CD4-positive, alpha-beta memory T cell (primary cell): ENCODE measurements at regions of chr17 and their contacts with region 1.

Region 1: GRCh38 chr17:39153599-39154051 is 2.2 kb upstream of the PLXDC1 start:
- DNase-seq: peak; percentile 87 to 93 (median 92)
- H3K4me3 ChIP-seq: peak overlapping the region; percentile 82 to 98
- H3K4me3 Mint-ChIP-seq: peak overlapping the region; percentile 96 to 100 (median 99)
- H3K27ac ChIP-seq: peak overlapping the region; percentile 66
- H3K27ac Mint-ChIP-seq: peak overlapping the region; percentile 93 to 100 (median 98)
- H3K4me1 ChIP-seq: peaks cover 33% of the 10 kb centered on the region
- H3K4me1 Mint-ChIP-seq: peaks cover 28 to 57% (median 43%) of the 10 kb centered on the region in 4 donors
- H3K27me3 ChIP-seq: no peaks in the 10 kb centered on the region
- H3K27me3 Mint-ChIP-seq: peaks cover 3 to 18% of the 10 kb centered on the region in 2 donors

Region 2: DNA sequence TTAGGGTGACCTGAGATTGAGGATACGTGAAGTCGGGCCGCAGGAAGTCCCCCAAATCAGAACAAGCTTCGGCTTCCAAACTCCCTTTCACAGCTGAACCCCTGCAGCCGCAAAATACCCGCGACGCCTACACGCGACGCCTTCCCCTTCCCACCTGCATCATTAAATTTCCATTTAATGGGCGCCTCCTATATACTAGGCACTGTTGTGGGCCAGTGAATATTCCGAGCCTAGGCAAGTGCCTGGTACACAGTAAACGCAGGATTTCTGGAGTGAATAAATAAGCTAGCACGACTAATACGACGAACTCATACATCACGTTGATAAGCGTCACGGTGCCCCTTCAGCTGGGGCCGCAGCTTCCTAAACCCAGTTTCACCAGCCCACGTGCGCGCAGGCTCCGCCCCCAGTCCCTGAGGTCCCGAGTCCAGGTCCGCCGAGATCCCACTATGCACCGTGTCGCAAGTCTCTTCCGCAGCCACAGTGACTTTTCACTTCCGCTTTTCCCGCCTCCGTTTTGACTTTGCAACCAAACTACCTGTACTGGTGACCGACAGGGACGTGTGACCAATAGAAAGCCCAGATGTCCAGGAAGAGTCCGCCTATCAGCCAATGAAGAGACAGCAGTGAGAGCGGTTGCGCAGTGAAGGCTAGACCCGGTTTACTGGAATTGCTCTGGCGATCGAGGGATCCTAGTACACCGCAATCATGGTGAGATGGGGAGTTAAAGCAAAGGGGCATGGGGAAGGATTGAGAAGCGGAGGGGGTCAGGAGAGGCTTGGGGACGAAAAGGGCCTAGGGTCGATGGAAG is 401.3 kb before region 1 on chr17 and contains the start of gene PSMB3:
- CTCF ChIA-PET with region 1: no interaction called
- POLR2A ChIA-PET with region 1: interaction called, 7 read pairs
- intact Hi-C with region 1: loop called (anchors 2 kb)
- DNase-seq: peak; percentile 95 to 99 (median 97)
- H3K4me3 ChIP-seq: peak within 1 kb of the TSS; percentile 81 to 94
- H3K4me3 Mint-ChIP-seq: peak within 1 kb of the TSS; percentile 95 to 100 (median 99)
- H3K27ac ChIP-seq: peak within 1 kb of the TSS; percentile 84
- H3K27ac Mint-ChIP-seq: peak within 1 kb of the TSS; percentile 93 to 100 (median 98)
- H3K4me1 ChIP-seq: peaks cover 57% of the 10 kb centered on the region
- H3K4me1 Mint-ChIP-seq: peaks cover 25 to 57% (median 43%) of the 10 kb centered on the region in 4 donors
- H3K27me3 ChIP-seq: peaks cover 24% of the 10 kb centered on the region
- H3K27me3 Mint-ChIP-seq: peaks cover 7 to 16% of the 10 kb centered on the region in 2 donors
- total RNA-seq, gene PSMB3: 93.5 to 99.0 TPM

Region 3: GRCh38 chr17:38868817-38869525 is 284.7 kb before region 1 on chr17:
- CTCF ChIA-PET with region 1: interaction called, 24 read pairs
- POLR2A ChIA-PET with region 1: interaction called, 62 read pairs
- intact Hi-C with region 1: loop called (anchors 1 kb)
- DNase-seq: peak; percentile 85 to 91 (median 87)
- H3K4me3 ChIP-seq: peak overlapping the region; percentile 66 to 99
- H3K4me3 Mint-ChIP-seq: peak overlapping the region; percentile 93 to 100 (median 96)
- H3K27ac ChIP-seq: peak overlapping the region; percentile 88
- H3K27ac Mint-ChIP-seq: peak overlapping the region; percentile 96 to 100 (median 97)
- H3K4me1 ChIP-seq: peaks cover 45% of the 10 kb centered on the region
- H3K4me1 Mint-ChIP-seq: peaks cover 35 to 63% (median 44%) of the 10 kb centered on the region in 4 donors
- H3K27me3 ChIP-seq: no peaks in the 10 kb centered on the region
- H3K27me3 Mint-ChIP-seq: peaks cover 0 to 7% of the 10 kb centered on the region in 2 donors

Region 4: DNA sequence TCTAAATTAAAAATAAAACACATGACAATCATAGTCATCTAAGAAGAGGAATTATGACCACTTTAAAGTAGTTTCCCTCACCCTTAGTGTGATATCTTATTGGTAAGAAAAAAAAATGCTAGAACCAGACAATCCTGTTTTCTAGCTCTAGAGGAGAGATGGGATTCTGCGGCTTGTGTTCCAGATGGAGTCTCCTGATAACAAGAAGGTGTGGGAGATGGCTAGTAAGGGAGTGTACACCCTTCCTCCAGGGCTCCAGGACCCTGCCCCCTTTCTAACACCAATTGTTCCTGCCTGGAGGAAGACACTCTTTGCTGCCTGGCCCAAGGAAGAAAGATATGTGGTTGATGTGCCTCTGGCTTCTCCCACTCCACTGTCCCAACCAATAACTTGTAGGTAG is 117.6 kb before region 1 on chr17:
- CTCF ChIA-PET with region 1: no interaction called
- POLR2A ChIA-PET with region 1: no interaction called
- intact Hi-C with region 1: no loop called
- DNase-seq: no peak
- H3K4me3 ChIP-seq: no peak overlapping the region
- H3K4me3 Mint-ChIP-seq: no peak overlapping the region
- H3K27ac ChIP-seq: no peak overlapping the region
- H3K27ac Mint-ChIP-seq: no peak overlapping the region
- H3K4me1 ChIP-seq: no peaks in the 10 kb centered on the region
- H3K4me1 Mint-ChIP-seq: no peaks in the 10 kb centered on the region
- H3K27me3 ChIP-seq: no peaks in the 10 kb centered on the region
- H3K27me3 Mint-ChIP-seq: peaks cover 2 to 7% of the 10 kb centered on the region in 2 donors

Region 5: DNA sequence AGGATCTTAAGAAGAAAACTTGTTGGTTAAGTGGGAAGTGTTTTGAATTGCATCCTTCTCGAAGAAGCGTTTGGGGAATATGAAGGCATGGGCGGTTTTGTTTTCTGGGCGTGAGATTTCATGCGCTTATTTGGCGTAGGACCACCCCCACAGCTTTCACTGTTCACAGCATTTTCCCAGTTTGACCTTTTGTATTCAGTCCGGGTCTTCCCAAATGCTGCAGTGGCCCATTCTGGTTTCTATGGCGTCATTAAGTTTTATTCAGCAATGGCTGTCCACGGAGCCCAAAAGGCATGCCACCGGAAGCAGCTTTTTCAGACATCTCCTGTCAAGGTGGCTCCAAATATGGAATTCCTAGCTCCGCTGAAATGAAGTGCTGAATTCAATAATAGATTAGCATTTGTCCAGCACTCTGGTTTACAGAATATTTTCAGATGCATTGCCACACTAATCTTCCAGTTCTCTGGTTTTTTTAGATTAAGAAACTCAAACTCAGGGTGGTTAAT is 95.9 kb before region 1 on chr17:
- CTCF ChIA-PET with region 1: interaction called, 31 read pairs
- POLR2A ChIA-PET with region 1: interaction called, 17 read pairs
- intact Hi-C with region 1: loop called (anchors 1 kb)
- DNase-seq: no peak
- H3K4me3 ChIP-seq: peak overlapping the region in 1 of 2 donors; percentile 64
- H3K4me3 Mint-ChIP-seq: peak overlapping the region in 7 of 8 donors; percentile 77 to 88 (median 84)
- H3K27ac ChIP-seq: no peak overlapping the region
- H3K27ac Mint-ChIP-seq: peak overlapping the region in 1 of 7 donors; percentile 66
- H3K4me1 ChIP-seq: no peaks in the 10 kb centered on the region
- H3K4me1 Mint-ChIP-seq: peaks cover 2 to 20% (median 6%) of the 10 kb centered on the region in 4 donors
- H3K27me3 ChIP-seq: no peaks in the 10 kb centered on the region
- H3K27me3 Mint-ChIP-seq: no peaks in the 10 kb centered on the region

Region 6: DNA sequence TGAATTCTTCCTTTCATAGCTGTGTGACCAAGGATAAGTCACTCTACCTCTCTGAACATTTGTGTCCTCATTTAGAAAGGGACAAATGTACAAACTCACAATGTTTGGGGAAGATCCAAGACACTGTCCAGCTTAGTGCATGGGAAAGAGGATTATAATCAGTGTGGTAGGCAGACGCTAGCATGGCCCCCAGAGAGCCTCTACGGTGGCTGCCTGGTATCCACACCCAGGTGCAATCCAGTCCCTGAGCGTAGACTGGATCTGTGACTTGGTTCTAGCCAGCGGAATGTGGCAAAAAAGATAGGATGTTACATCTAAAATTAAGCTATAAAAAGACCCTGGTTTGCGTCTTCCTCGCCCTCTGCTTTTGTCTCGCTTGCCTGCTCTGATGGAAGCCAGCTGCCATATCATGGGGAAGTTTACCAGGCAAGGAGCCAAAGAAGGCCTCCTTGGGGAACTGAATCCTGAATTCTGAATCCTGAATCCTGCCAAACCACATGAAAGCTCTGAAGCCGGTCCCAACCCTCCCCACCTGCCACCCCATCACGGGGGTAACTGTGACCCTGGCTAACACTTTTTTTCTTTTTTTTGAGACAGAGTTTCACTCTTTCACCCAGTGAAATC is 53.9 kb before region 1 on chr17:
- CTCF ChIA-PET with region 1: interaction called, 86 read pairs
- POLR2A ChIA-PET with region 1: interaction called, 76 read pairs
- intact Hi-C with region 1: loop called (anchors 1 kb)
- DNase-seq: no peak
- H3K4me3 ChIP-seq: no peak overlapping the region
- H3K4me3 Mint-ChIP-seq: no peak overlapping the region
- H3K27ac ChIP-seq: no peak overlapping the region
- H3K27ac Mint-ChIP-seq: peak overlapping the region in 4 of 7 donors; percentile 11 to 29 (median 19)
- H3K4me1 ChIP-seq: peaks cover 46% of the 10 kb centered on the region
- H3K4me1 Mint-ChIP-seq: peaks cover 40 to 68% (median 46%) of the 10 kb centered on the region in 4 donors
- H3K27me3 ChIP-seq: no peaks in the 10 kb centered on the region
- H3K27me3 Mint-ChIP-seq: no peaks in the 10 kb centered on the region

Region 7: GRCh38 chr17:39186481-39187002 is 32.9 kb after region 1 on chr17:
- CTCF ChIA-PET with region 1: no interaction called
- POLR2A ChIA-PET with region 1: no interaction called
- intact Hi-C with region 1: no loop called
- DNase-seq: no peak
- H3K4me3 ChIP-seq: no peak overlapping the region
- H3K4me3 Mint-ChIP-seq: no peak overlapping the region
- H3K27ac ChIP-seq: no peak overlapping the region
- H3K27ac Mint-ChIP-seq: no peak overlapping the region
- H3K4me1 ChIP-seq: no peaks in the 10 kb centered on the region
- H3K4me1 Mint-ChIP-seq: no peaks in the 10 kb centered on the region
- H3K27me3 ChIP-seq: no peaks in the 10 kb centered on the region
- H3K27me3 Mint-ChIP-seq: no peaks in the 10 kb centered on the region

Region 8: GRCh38 chr17:39235555-39236449 is 82.2 kb after region 1 on chr17:
- CTCF ChIA-PET with region 1: interaction called, 15 read pairs
- POLR2A ChIA-PET with region 1: interaction called, 15 read pairs
- intact Hi-C with region 1: loop called (anchors 2 kb)
- DNase-seq: peak; percentile 53 to 66 (median 56)
- H3K4me3 ChIP-seq: no peak overlapping the region
- H3K4me3 Mint-ChIP-seq: peak overlapping the region in 2 of 8 donors; percentile 50 to 73
- H3K27ac ChIP-seq: no peak overlapping the region
- H3K27ac Mint-ChIP-seq: peak overlapping the region; percentile 61 to 93 (median 82)
- H3K4me1 ChIP-seq: peaks cover 43% of the 10 kb centered on the region
- H3K4me1 Mint-ChIP-seq: peaks cover 31 to 45% (median 38%) of the 10 kb centered on the region in 4 donors
- H3K27me3 ChIP-seq: no peaks in the 10 kb centered on the region
- H3K27me3 Mint-ChIP-seq: peaks cover 4 to 11% of the 10 kb centered on the region in 2 donors

Region 9: GRCh38 chr17:39284685-39285084 is 131.1 kb after region 1 on chr17:
- CTCF ChIA-PET with region 1: no interaction called
- POLR2A ChIA-PET with region 1: no interaction called
- intact Hi-C with region 1: no loop called
- DNase-seq: no peak
- H3K4me3 ChIP-seq: no peak overlapping the region
- H3K4me3 Mint-ChIP-seq: no peak overlapping the region
- H3K27ac ChIP-seq: no peak overlapping the region
- H3K27ac Mint-ChIP-seq: no peak overlapping the region
- H3K4me1 ChIP-seq: no peaks in the 10 kb centered on the region
- H3K4me1 Mint-ChIP-seq: no peaks in the 10 kb centered on the region
- H3K27me3 ChIP-seq: no peaks in the 10 kb centered on the region
- H3K27me3 Mint-ChIP-seq: no peaks in the 10 kb centered on the region